CD8-positive, alpha-beta memory T cell (primary cell): ENCODE measurements at regions of chr4 and their contacts with region 1.

Region 1: GRCh38 chr4:4260253-4260652 is 12.2 kb upstream of the TMEM128 start:
- DNase-seq: peak in 2 of 5 donors; percentile 53 to 71
- H3K4me3 ChIP-seq: no peak overlapping the region
- H3K4me3 Mint-ChIP-seq: peak overlapping the region in 1 of 7 donors; percentile 1
- H3K27ac ChIP-seq: no peak overlapping the region
- H3K27ac Mint-ChIP-seq: peak overlapping the region in 7 of 8 donors; percentile 29 to 82 (median 69)
- H3K4me1 ChIP-seq: peaks cover 7% of the 10 kb centered on the region
- H3K4me1 Mint-ChIP-seq: peaks cover 20 to 35% (median 35%) of the 10 kb centered on the region in 3 donors
- H3K27me3 ChIP-seq: no peaks in the 10 kb centered on the region
- H3K27me3 Mint-ChIP-seq: no peaks in the 10 kb centered on the region

Region 2: GRCh38 chr4:4284827-4285618 is 24.8 kb after region 1 on chr4:
- CTCF ChIA-PET with region 1: interaction called, 25 read pairs
- POLR2A ChIA-PET with region 1: interaction called, 10 read pairs
- DNase-seq: no peak
- H3K4me3 ChIP-seq: no peak overlapping the region
- H3K4me3 Mint-ChIP-seq: peak overlapping the region in 1 of 7 donors; percentile 58
- H3K27ac ChIP-seq: no peak overlapping the region
- H3K27ac Mint-ChIP-seq: peak overlapping the region in 5 of 8 donors; percentile 0 to 68 (median 37)
- H3K4me1 ChIP-seq: peaks cover 23% of the 10 kb centered on the region
- H3K4me1 Mint-ChIP-seq: peaks cover 45 to 81% (median 60%) of the 10 kb centered on the region in 3 donors
- H3K27me3 ChIP-seq: no peaks in the 10 kb centered on the region
- H3K27me3 Mint-ChIP-seq: no peaks in the 10 kb centered on the region

Region 3: GRCh38 chr4:4296283-4296846 is 36.1 kb after region 1 on chr4:
- CTCF ChIA-PET with region 1: interaction called, 10 read pairs
- POLR2A ChIA-PET with region 1: no interaction called
- DNase-seq: no peak
- H3K4me3 ChIP-seq: no peak overlapping the region
- H3K4me3 Mint-ChIP-seq: no peak overlapping the region
- H3K27ac ChIP-seq: no peak overlapping the region
- H3K27ac Mint-ChIP-seq: peak overlapping the region in 3 of 8 donors; percentile 11 to 40 (median 19)
- H3K4me1 ChIP-seq: peaks cover 4% of the 10 kb centered on the region
- H3K4me1 Mint-ChIP-seq: peaks cover 48 to 78% (median 75%) of the 10 kb centered on the region in 3 donors
- H3K27me3 ChIP-seq: no peaks in the 10 kb centered on the region
- H3K27me3 Mint-ChIP-seq: no peaks in the 10 kb centered on the region

Region 4: DNA sequence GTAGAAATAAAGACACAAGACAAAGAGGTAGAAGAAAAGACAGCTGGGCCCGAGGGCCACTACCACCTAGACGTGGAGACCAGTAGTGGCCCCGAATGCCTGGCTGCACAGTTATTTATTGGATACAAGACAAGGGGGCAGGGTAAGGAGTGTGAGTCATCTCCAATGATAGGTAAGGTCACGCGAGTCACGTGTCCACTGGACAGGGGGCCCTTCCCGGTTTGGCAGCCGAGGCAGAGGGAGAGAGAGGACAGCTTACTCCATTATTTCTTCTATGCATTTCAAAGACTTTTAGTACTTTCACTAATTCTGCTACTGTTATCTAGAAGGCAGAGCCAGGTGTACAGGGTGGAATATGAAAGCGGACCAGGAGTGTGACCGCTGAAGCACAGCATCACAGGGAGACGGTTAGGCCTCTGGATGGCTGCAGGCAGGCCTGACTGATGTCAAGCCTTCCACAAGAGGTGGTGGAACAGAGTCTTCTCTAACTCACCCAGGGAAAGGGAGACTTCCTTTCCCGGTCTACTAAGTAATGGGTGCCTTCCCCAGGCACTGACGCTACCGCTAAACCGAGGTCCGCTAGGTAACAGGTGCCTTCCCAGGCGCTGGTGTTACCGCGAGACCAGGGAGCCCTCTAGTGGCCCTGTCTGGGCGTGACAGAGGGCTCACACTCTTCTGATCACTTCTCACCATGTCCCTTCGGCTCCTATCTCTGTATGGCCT is 74.7 kb after region 1 on chr4:
- CTCF ChIA-PET with region 1: interaction called, 97 read pairs
- POLR2A ChIA-PET with region 1: interaction called, 4 read pairs
- DNase-seq: peak; percentile 68 to 86 (median 73)
- H3K4me3 ChIP-seq: no peak overlapping the region
- H3K4me3 Mint-ChIP-seq: peak overlapping the region in 5 of 7 donors; percentile 30 to 79 (median 52)
- H3K27ac ChIP-seq: no peak overlapping the region
- H3K27ac Mint-ChIP-seq: peak overlapping the region in 5 of 8 donors; percentile 6 to 84 (median 62)
- H3K4me1 ChIP-seq: no peaks in the 10 kb centered on the region
- H3K4me1 Mint-ChIP-seq: peaks cover 8 to 16% (median 15%) of the 10 kb centered on the region in 3 donors
- H3K27me3 ChIP-seq: no peaks in the 10 kb centered on the region
- H3K27me3 Mint-ChIP-seq: no peaks in the 10 kb centered on the region

Region 5: DNA sequence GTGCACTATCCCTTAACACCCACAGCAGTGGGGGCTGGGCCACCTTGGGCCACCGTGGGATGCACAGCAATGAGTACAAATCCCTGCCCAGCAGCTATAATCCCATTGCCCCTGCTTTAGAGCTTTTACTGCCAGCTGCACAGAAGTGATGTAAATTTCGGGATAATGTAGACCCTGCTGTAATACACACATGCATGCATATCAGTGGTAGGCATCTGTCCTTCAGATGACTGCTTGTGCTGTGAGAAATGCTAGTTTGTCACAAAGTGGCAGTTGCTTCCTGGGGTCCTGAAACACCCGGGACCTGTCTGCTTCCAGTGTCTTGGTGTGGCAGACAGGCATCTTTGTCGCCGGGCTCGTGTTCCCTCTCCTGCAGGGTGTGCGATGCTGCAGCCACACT is 140.8 kb after region 1 on chr4:
- CTCF ChIA-PET with region 1: no interaction called
- POLR2A ChIA-PET with region 1: no interaction called
- DNase-seq: no peak
- H3K4me3 ChIP-seq: no peak overlapping the region
- H3K4me3 Mint-ChIP-seq: no peak overlapping the region
- H3K27ac ChIP-seq: no peak overlapping the region
- H3K27ac Mint-ChIP-seq: peak overlapping the region in 1 of 8 donors; percentile 6
- H3K4me1 ChIP-seq: no peaks in the 10 kb centered on the region
- H3K4me1 Mint-ChIP-seq: peaks cover 0 to 20% (median 0%) of the 10 kb centered on the region in 3 donors
- H3K27me3 ChIP-seq: no peaks in the 10 kb centered on the region
- H3K27me3 Mint-ChIP-seq: peaks cover 4 to 8% of the 10 kb centered on the region in 2 donors

Region 6: DNA sequence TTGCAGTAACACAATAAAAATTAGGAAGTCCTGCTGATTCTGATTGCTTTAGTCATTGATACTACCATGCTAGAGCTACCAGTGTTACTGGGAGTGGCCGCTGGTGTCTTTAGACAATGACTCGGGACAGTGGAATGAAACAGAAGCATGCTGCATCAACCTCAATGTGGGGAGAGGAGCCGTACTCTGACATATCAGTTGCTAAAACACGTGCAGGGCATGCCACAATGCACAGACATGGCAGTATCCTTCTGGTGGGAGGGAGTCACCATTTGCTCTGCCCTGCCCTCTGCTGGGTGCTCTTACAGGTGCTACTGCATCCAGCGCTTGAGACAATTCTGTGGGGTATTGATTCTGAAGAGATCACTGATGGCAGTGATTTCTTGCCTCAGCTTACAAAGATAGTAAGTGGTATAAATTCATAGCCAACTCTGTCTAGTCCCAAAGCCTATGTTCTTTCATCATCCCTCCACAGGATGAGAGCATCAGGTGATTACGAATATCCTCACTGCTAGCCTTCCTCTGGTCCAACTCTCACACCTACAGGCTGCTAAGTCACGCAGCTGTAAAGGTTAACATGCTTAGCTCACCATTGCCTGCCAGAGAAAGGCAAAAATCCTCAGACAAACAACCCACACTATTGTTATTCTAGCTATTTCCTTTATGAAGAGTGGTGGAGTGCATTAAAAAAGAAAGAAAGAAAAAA is 170.4 kb after region 1 on chr4:
- CTCF ChIA-PET with region 1: interaction called, 25 read pairs
- POLR2A ChIA-PET with region 1: no interaction called
- DNase-seq: peak; percentile 26 to 75 (median 35)
- H3K4me3 ChIP-seq: no peak overlapping the region
- H3K4me3 Mint-ChIP-seq: no peak overlapping the region
- H3K27ac ChIP-seq: no peak overlapping the region
- H3K27ac Mint-ChIP-seq: peak overlapping the region in 3 of 8 donors; percentile 2 to 54 (median 25)
- H3K4me1 ChIP-seq: no peaks in the 10 kb centered on the region
- H3K4me1 Mint-ChIP-seq: peaks cover 6 to 8% (median 7%) of the 10 kb centered on the region in 3 donors
- H3K27me3 ChIP-seq: no peaks in the 10 kb centered on the region
- H3K27me3 Mint-ChIP-seq: no peaks in the 10 kb centered on the region